CD4-positive, alpha-beta memory T cell (primary cell): ENCODE measurements at regions of chr1 and their contacts with region 1.

Region 1: DNA sequence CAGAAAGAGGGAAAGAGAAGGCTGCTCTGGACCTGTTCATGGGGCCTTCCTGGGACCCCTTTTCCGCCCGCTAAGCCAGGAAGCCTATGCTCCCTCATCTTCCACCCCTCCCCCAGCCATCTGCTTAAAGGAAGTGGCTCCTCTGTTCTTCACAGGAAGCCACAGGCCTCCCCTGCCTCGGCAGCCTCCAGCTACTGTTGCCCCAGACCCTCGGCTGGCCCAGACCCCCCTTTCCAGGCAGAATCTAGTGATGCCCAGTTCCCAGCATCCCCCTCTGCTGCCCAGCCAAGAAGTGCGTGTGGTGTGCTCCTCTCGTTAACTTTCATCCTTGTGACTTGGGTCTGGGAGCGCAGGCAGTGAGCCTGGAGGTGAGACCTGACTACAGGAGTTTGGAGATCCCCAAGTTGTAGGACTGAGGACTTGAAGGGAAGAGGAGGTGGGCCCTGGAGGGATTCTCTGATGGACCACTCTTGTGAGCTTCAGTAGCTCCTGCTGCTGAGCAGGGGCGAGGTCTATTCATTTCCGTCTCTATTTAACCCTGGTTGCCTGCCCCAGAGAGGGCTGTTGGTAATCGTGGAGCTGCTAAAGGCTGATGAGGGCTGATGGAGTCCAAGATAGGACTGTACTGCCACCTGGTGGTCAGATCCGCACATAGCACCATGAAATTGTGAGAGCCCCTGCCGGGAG is 9.1 kb downstream of the IFI6 start:
- DNase-seq: peak; percentile 85 to 89 (median 87)
- H3K4me3 ChIP-seq: peak overlapping the region; percentile 18 to 49
- H3K4me3 Mint-ChIP-seq: peak overlapping the region; percentile 69 to 93 (median 84)
- H3K27ac ChIP-seq: peak overlapping the region; percentile 76
- H3K27ac Mint-ChIP-seq: peak overlapping the region; percentile 95 to 100 (median 98)
- H3K4me1 ChIP-seq: peaks cover 50% of the 10 kb centered on the region
- H3K4me1 Mint-ChIP-seq: peaks cover 41 to 50% (median 46%) of the 10 kb centered on the region in 4 donors
- H3K27me3 ChIP-seq: no peaks in the 10 kb centered on the region
- H3K27me3 Mint-ChIP-seq: no peaks in the 10 kb centered on the region

Region 2: GRCh38 chr1:27300341-27301051 is 362.4 kb before region 1 on chr1:
- CTCF ChIA-PET with region 1: interaction called, 5 read pairs
- POLR2A ChIA-PET with region 1: interaction called, 3 read pairs
- intact Hi-C with region 1: loop called (anchors 1 kb)
- DNase-seq: peak; percentile 66 to 79 (median 76)
- H3K4me3 ChIP-seq: no peak overlapping the region
- H3K4me3 Mint-ChIP-seq: no peak overlapping the region
- H3K27ac ChIP-seq: no peak overlapping the region
- H3K27ac Mint-ChIP-seq: peak overlapping the region in 1 of 7 donors; percentile 43
- H3K4me1 ChIP-seq: no peaks in the 10 kb centered on the region
- H3K4me1 Mint-ChIP-seq: peaks cover 0 to 2% (median 1%) of the 10 kb centered on the region in 4 donors
- H3K27me3 ChIP-seq: no peaks in the 10 kb centered on the region
- H3K27me3 Mint-ChIP-seq: no peaks in the 10 kb centered on the region

Region 3: DNA sequence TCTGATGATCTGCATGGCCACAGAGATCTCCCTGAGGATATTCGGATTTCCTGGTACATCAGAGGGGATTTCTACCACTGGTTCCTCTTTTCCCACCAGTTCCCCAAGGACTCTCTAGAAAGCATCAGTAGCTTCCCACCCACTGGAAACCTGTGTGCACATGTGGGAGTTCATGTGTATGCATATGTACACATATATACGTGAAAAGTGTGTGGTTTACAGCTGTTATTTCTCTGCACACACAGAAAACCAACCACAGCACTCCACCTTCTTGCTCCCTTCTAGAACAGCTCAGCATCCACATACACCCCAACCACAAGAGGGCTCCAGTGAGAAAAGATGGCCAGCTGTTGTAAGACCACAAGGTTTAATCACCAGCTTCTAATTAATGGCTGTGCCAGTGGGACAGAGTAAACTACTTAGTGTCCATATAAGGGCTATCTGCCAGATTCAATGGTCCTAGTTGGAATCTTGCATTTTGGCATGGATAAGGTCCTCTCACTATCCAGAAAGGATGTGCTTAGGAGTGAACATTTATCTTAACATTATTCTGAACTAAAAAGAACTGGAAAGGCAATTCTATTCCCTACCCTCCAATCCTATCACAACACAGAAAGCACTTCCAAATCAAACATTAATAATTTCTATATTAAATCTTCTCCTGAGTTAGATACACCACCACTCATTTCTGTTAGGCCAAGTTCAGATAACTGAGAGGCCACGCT is 246.3 kb before region 1 on chr1:
- CTCF ChIA-PET with region 1: interaction called, 12 read pairs
- POLR2A ChIA-PET with region 1: interaction called, 5 read pairs
- intact Hi-C with region 1: loop called (anchors 2 kb)
- DNase-seq: peak; percentile 51 to 67 (median 60)
- H3K4me3 ChIP-seq: no peak overlapping the region
- H3K4me3 Mint-ChIP-seq: no peak overlapping the region
- H3K27ac ChIP-seq: no peak overlapping the region
- H3K27ac Mint-ChIP-seq: peak overlapping the region; percentile 29 to 75 (median 42)
- H3K4me1 ChIP-seq: peaks cover 42% of the 10 kb centered on the region
- H3K4me1 Mint-ChIP-seq: peaks cover 19 to 42% (median 30%) of the 10 kb centered on the region in 4 donors
- H3K27me3 ChIP-seq: no peaks in the 10 kb centered on the region
- H3K27me3 Mint-ChIP-seq: no peaks in the 10 kb centered on the region

Region 4: DNA sequence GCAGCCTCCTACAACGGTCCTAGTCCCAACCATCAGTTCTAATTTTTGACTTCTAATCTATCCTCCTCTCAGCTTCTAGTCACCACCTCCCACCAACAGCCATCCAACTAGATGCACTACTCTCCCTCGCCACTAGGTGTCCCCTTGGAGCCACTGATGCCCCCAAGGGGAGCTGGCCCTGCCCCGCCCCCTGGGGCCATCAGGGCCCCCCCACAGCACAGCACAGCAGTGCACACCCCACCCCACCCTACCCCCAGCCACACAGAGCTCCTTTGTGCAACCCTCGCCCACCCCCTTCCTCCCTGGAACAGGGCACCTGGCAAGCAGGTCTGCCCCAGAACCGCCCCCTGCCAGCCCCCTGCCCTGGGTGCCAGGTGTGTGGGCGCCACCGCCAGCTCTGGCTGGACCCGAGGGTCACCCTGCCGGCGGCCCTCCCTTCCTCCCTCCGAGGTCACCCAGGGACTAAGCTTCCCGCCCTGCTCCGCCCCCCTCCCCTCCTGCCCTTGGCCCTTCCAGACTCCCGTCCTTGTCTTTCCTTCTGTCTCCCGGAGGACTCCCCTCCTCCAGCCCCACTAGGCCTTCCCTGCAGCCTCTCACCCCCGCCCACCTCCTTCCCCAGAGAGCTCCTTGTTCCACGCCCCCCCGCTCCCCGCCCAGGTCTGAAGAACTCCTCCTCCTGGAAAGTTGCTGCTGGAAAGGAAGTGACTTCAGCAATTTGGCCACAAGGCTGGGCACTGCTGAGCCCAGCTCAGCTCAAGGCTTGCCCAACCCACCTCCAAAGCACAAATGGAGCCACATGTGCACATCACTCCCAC is 105.9 kb before region 1 on chr1:
- CTCF ChIA-PET with region 1: interaction called, 27 read pairs
- POLR2A ChIA-PET with region 1: interaction called, 16 read pairs
- intact Hi-C with region 1: loop called (anchors 1 kb)
- DNase-seq: peak; percentile 65 to 70 (median 69)
- H3K4me3 ChIP-seq: no peak overlapping the region
- H3K4me3 Mint-ChIP-seq: peak overlapping the region; percentile 18 to 78 (median 45)
- H3K27ac ChIP-seq: no peak overlapping the region
- H3K27ac Mint-ChIP-seq: peak overlapping the region in 5 of 7 donors; percentile 49 to 77 (median 59)
- H3K4me1 ChIP-seq: peaks cover 17% of the 10 kb centered on the region
- H3K4me1 Mint-ChIP-seq: peaks cover 18 to 44% (median 28%) of the 10 kb centered on the region in 4 donors
- H3K27me3 ChIP-seq: no peaks in the 10 kb centered on the region
- H3K27me3 Mint-ChIP-seq: no peaks in the 10 kb centered on the region

Region 5: DNA sequence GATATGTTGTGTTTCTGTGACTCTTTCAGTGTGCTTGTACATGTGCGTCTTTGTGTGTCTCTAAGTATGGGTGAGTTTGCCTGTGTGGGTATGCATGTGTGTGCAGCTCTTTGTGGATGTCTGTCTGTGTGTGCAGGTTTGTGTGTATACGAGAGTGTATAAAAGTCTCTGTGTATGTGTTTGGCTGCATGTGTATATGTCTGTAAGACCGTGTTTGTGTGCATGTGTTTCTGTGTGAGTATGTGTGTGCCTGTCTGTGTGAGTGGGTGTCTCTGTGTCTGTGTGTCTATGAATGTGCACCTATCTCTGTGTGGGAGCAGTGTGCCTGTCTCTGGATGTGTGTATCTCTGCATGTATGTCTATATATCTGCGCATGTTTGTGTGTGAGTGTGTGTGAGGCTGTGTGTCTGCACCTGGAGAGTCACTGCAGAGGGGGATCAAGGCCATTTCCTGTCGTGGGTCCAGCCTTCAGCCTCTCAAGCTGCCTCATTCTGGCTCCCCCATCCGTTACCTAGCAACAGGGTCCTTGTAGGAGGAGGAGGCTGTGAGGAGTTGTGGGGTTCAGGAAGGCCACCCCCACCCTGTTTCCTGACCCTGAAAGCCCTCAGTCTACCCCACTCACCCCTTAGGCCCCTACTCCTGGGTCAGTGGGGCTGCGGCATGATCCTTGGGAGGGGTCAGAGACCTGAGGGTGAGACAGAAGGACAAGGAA is 38.2 kb before region 1 on chr1:
- CTCF ChIA-PET with region 1: interaction called, 550 read pairs
- POLR2A ChIA-PET with region 1: interaction called, 237 read pairs
- intact Hi-C with region 1: no loop called
- DNase-seq: no peak
- H3K4me3 ChIP-seq: no peak overlapping the region
- H3K4me3 Mint-ChIP-seq: no peak overlapping the region
- H3K27ac ChIP-seq: no peak overlapping the region
- H3K27ac Mint-ChIP-seq: no peak overlapping the region
- H3K4me1 ChIP-seq: peaks cover 36% of the 10 kb centered on the region
- H3K4me1 Mint-ChIP-seq: peaks cover 15 to 24% (median 18%) of the 10 kb centered on the region in 4 donors
- H3K27me3 ChIP-seq: no peaks in the 10 kb centered on the region
- H3K27me3 Mint-ChIP-seq: no peaks in the 10 kb centered on the region

Region 6: GRCh38 chr1:27650539-27651175 is 12.2 kb before region 1 on chr1:
- CTCF ChIA-PET with region 1: interaction called, 32 read pairs
- POLR2A ChIA-PET with region 1: interaction called, 44 read pairs
- intact Hi-C with region 1: no loop called
- DNase-seq: no peak
- H3K4me3 ChIP-seq: no peak overlapping the region
- H3K4me3 Mint-ChIP-seq: no peak overlapping the region
- H3K27ac ChIP-seq: no peak overlapping the region
- H3K27ac Mint-ChIP-seq: peak overlapping the region in 5 of 7 donors; percentile 10 to 79 (median 25)
- H3K4me1 ChIP-seq: peaks cover 8% of the 10 kb centered on the region
- H3K4me1 Mint-ChIP-seq: peaks cover 5 to 14% (median 10%) of the 10 kb centered on the region in 4 donors
- H3K27me3 ChIP-seq: no peaks in the 10 kb centered on the region
- H3K27me3 Mint-ChIP-seq: no peaks in the 10 kb centered on the region

Region 7: GRCh38 chr1:27689423-27690173 is 26.7 kb after region 1 on chr1:
- CTCF ChIA-PET with region 1: no interaction called
- POLR2A ChIA-PET with region 1: no interaction called
- intact Hi-C with region 1: no loop called
- DNase-seq: no peak
- H3K4me3 ChIP-seq: no peak overlapping the region
- H3K4me3 Mint-ChIP-seq: no peak overlapping the region
- H3K27ac ChIP-seq: no peak overlapping the region
- H3K27ac Mint-ChIP-seq: no peak overlapping the region
- H3K4me1 ChIP-seq: no peaks in the 10 kb centered on the region
- H3K4me1 Mint-ChIP-seq: peaks cover 0 to 3% (median under 1%) of the 10 kb centered on the region in 4 donors
- H3K27me3 ChIP-seq: no peaks in the 10 kb centered on the region
- H3K27me3 Mint-ChIP-seq: peaks cover 3 to 4% of the 10 kb centered on the region in 2 donors